Naive thymus-derived CD4-positive, alpha-beta T cell (primary cell): ENCODE measurements at regions of chr5 and their contacts with region 1.

Region 1: DNA sequence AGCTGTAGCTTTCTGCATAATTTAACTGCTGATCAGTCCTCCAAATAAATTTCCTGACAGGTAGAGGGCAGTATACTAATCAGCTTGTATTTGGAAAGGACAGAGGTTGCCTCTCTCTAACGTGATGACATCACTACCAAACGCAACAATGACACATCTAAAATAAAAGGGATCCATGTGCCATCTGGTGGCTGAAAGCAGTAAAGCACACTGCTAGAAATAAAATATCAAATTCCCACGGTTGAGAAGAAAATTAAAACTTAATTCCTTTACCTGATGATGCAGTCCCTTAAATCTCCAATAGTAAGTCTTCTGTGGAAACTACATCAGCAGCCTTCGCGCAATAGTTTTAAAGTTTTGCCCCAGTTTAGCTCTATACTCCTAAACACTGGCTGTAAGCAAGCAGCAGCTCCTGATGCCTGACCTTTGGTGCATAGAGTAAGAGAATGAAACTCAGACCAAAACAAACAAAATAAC is 54.5 kb downstream of the DIAPH1 start:
- DNase-seq: peak; percentile 17 to 89 (median 80)
- ATAC-seq: peak; percentile 100
- H3K4me3 ChIP-seq: no peak overlapping the region
- H3K4me3 Mint-ChIP-seq: peak overlapping the region in 1 of 10 donors; percentile 8
- H3K27ac ChIP-seq: peak overlapping the region; percentile 43
- H3K27ac Mint-ChIP-seq: peak overlapping the region; percentile 41 to 93 (median 72)
- H3K4me1 ChIP-seq: peaks cover 0 to 8% of the 10 kb centered on the region in 2 donors
- H3K4me1 Mint-ChIP-seq: peaks cover 13 to 51% (median 38%) of the 10 kb centered on the region in 7 donors
- H3K27me3 ChIP-seq: no peaks in the 10 kb centered on the region
- H3K27me3 Mint-ChIP-seq: no peaks in the 10 kb centered on the region

Region 2: DNA sequence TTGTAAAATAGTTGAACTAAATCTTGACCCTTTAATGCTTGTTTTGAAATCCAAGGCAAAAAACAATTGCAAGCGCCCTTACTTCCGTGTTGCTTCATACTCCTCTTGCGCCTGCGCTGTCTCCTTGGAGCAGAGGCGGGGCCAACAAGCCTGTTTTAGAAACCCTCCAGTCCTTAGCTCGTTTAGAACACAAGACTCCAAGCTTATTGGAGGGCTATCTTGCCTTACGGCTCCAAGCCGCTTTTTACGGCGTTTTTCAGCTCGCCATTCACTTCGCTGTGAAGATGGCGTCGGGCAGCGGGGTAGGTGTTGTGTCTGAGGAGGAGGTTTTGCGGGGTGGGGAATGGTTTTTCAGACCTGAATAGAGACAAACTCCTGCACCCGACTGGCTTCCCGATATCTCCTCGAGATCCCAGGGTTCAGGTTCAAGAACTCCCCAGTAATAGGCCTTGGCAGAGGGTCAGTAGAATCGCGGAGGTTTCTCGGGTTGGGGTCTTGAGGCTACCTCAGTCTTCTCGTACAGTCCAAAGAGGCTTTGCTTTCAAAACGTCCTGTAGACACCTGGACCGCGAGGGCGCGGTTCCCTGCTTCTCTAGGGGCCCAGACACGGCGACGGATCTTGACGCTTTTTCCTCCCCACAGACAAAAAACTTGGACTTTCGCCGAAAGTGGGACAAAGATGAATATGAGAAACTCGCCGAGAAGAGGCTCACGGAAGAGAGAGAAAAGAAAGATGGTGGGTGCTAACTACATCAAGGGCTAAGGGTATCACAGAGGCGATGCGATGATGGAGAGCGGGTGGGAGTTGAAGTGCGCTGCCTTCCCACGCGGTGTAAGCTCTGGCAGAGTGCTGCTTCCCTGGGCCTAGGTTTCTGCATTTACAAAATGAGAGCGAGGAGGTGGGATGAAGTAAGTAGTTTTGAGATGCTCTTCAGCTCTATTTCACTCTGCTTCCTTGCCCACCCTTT is 863.8 kb before region 1 on chr5 and contains the start of gene ZMAT2:
- CTCF ChIA-PET with region 1: no interaction called
- POLR2A ChIA-PET with region 1: no interaction called
- intact Hi-C with region 1: loop called in 1 of 2 experiments (anchors 10 kb)
- DNase-seq: peak; percentile 74 to 97 (median 92)
- ATAC-seq: peak; percentile 100
- H3K4me3 ChIP-seq: peak within 1 kb of the TSS; percentile 78
- H3K4me3 Mint-ChIP-seq: peak within 1 kb of the TSS; percentile 93 to 100 (median 98)
- H3K27ac ChIP-seq: peak within 1 kb of the TSS; percentile 87
- H3K27ac Mint-ChIP-seq: peak within 1 kb of the TSS; percentile 90 to 99 (median 97)
- H3K4me1 ChIP-seq: peaks cover 4 to 14% of the 10 kb centered on the region in 2 donors
- H3K4me1 Mint-ChIP-seq: peaks cover 18 to 35% (median 29%) of the 10 kb centered on the region in 7 donors
- H3K27me3 ChIP-seq: no peaks in the 10 kb centered on the region
- H3K27me3 Mint-ChIP-seq: no peaks in the 10 kb centered on the region
- total RNA-seq, gene ZMAT2: 37.7 to 63.0 (median 55.1) TPM

Region 3: DNA sequence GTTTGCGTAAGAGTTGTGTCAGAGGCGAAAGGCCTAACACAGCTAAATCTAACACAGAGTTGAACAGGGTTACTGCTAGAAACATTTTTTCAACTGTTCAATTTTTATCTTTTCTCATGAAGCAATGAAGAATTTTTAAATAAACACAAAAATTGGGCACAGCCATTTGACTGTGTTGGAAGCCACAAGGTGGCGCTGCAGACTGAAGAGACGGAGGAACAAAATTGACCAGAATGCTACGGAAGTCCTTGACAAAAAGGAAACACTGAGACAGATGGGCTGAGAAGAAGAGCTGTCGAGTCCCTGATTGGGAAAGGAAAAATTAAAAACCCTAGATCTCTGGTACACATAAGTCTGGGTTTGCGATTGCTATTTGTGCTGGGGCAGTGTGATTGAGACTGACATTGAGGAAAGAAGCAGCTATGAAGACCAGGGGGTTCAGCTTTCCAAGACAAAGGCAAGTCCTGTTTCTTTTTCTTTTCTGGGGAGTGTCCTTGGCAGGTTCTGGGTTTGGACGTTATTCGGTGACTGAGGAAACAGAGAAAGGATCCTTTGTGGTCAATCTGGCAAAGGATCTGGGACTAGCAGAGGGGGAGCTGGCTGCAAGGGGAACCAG is 377.2 kb before region 1 on chr5 and contains the start of gene PCDHB9:
- CTCF ChIA-PET with region 1: no interaction called
- POLR2A ChIA-PET with region 1: no interaction called
- intact Hi-C with region 1: loop called (anchors 1 to 5 kb)
- DNase-seq: peak in 1 of 9 donors; percentile 14
- ATAC-seq: no peak
- H3K4me3 ChIP-seq: no peak within 1 kb of the TSS
- H3K4me3 Mint-ChIP-seq: peak within 1 kb of the TSS; percentile 15 to 64 (median 35)
- H3K27ac ChIP-seq: no peak within 1 kb of the TSS
- H3K27ac Mint-ChIP-seq: no peak within 1 kb of the TSS
- H3K4me1 ChIP-seq: no peaks in the 10 kb centered on the region
- H3K4me1 Mint-ChIP-seq: peaks cover 0 to 12% (median 5%) of the 10 kb centered on the region in 7 donors
- H3K27me3 ChIP-seq: no peaks in the 10 kb centered on the region
- H3K27me3 Mint-ChIP-seq: peaks cover 3 to 86% (median 76%) of the 10 kb centered on the region in 5 donors
- total RNA-seq, gene PCDHB9: 1.2 TPM in 1 of 5 experiments, not detected in the others

Region 4: GRCh38 chr5:141326088-141326854 is 238.0 kb before region 1 on chr5:
- CTCF ChIA-PET with region 1: interaction called, 13 read pairs
- POLR2A ChIA-PET with region 1: interaction called, 26 read pairs
- intact Hi-C with region 1: loop called (anchors 1 to 2 kb)
- DNase-seq: peak; percentile 39 to 75 (median 57)
- ATAC-seq: peak; percentile 95
- H3K4me3 ChIP-seq: peak overlapping the region; percentile 73
- H3K4me3 Mint-ChIP-seq: peak overlapping the region; percentile 78 to 98 (median 90)
- H3K27ac ChIP-seq: peak overlapping the region; percentile 53
- H3K27ac Mint-ChIP-seq: peak overlapping the region; percentile 17 to 95 (median 80)
- H3K4me1 ChIP-seq: no peaks in the 10 kb centered on the region
- H3K4me1 Mint-ChIP-seq: peaks cover 0 to 15% (median 7%) of the 10 kb centered on the region in 7 donors
- H3K27me3 ChIP-seq: peaks cover 0 to 5% of the 10 kb centered on the region in 2 donors
- H3K27me3 Mint-ChIP-seq: peaks cover 8 to 48% (median 41%) of the 10 kb centered on the region in 5 donors

Region 5: GRCh38 chr5:141369994-141370848 is 194.0 kb before region 1 on chr5 and contains the start of gene PCDHGB3:
- CTCF ChIA-PET with region 1: interaction called, 5 read pairs
- POLR2A ChIA-PET with region 1: no interaction called
- intact Hi-C with region 1: loop called in 1 of 2 experiments (anchors 1 kb)
- DNase-seq: peak in 5 of 9 donors; percentile 21 to 42 (median 27)
- ATAC-seq: peak; percentile 76
- H3K4me3 ChIP-seq: peak within 1 kb of the TSS; percentile 29
- H3K4me3 Mint-ChIP-seq: peak within 1 kb of the TSS; percentile 70 to 86 (median 82)
- H3K27ac ChIP-seq: no peak within 1 kb of the TSS
- H3K27ac Mint-ChIP-seq: no peak within 1 kb of the TSS
- H3K4me1 ChIP-seq: no peaks in the 10 kb centered on the region
- H3K4me1 Mint-ChIP-seq: peaks cover 2 to 8% (median 6%) of the 10 kb centered on the region in 7 donors
- H3K27me3 ChIP-seq: peaks cover 0 to 11% of the 10 kb centered on the region in 2 donors
- H3K27me3 Mint-ChIP-seq: peaks cover 42 to 93% (median 82%) of the 10 kb centered on the region in 5 donors
- total RNA-seq, gene PCDHGB3: 0.24 to 0.59 (median 0.43) TPM

Region 6: DNA sequence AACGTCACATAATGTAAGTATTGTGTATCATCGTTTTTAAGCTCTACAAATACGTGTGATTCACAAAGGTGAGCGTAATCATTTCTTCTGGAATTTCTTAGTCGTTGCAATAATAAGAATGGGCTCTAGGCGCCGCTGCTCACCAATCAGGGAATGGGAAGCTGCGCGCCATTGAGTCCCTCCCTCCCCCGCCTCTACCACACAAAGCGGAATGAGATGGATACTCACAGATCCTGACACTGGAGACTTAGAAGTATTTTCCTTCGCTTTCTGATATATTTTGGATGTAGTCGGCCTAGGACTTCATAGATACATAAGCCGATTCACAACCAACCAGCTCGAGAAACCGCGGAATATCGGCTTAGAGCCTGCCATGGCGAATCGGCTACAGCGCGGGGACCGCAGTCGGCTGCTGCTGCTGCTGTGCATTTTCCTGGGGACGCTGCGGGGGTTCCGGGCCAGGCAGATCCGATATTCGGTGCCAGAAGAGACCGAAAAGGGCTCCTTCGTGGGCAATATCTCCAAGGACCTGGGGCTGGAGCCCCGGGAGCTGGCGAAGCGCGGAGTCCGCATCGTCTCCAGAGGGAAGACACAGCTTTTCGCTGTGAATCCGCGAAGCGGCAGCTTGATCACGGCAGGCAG is 143.3 kb before region 1 on chr5 and contains the start of gene PCDHGA11:
- CTCF ChIA-PET with region 1: interaction called, 10 read pairs
- POLR2A ChIA-PET with region 1: no interaction called
- intact Hi-C with region 1: loop called in 1 of 2 experiments (anchors 1 kb)
- DNase-seq: peak in 3 of 9 donors; percentile 25 to 28 (median 26)
- ATAC-seq: peak; percentile 70
- H3K4me3 ChIP-seq: no peak within 1 kb of the TSS
- H3K4me3 Mint-ChIP-seq: peak within 1 kb of the TSS; percentile 52 to 90 (median 77)
- H3K27ac ChIP-seq: no peak within 1 kb of the TSS
- H3K27ac Mint-ChIP-seq: peak within 1 kb of the TSS in 7 of 9 donors; percentile 51 to 73 (median 64)
- H3K4me1 ChIP-seq: no peaks in the 10 kb centered on the region
- H3K4me1 Mint-ChIP-seq: peaks cover 0 to 19% (median 7%) of the 10 kb centered on the region in 7 donors
- H3K27me3 ChIP-seq: peaks cover 8 to 33% of the 10 kb centered on the region in 2 donors
- H3K27me3 Mint-ChIP-seq: peaks cover 68 to 87% (median 78%) of the 10 kb centered on the region in 5 donors
- total RNA-seq, gene PCDHGA11: 0.16 to 0.29 (median 0.21) TPM in 4 of 5 experiments, not detected in the other

Region 7: DNA sequence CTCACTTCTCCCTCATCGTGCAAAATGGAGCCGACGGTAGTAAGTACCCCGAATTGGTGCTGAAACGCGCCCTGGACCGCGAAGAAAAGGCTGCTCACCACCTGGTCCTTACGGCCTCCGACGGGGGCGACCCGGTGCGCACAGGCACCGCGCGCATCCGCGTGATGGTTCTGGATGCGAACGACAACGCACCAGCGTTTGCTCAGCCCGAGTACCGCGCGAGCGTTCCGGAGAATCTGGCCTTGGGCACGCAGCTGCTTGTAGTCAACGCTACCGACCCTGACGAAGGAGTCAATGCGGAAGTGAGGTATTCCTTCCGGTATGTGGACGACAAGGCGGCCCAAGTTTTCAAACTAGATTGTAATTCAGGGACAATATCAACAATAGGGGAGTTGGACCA is 133.0 kb before region 1 on chr5:
- CTCF ChIA-PET with region 1: no interaction called
- POLR2A ChIA-PET with region 1: no interaction called
- intact Hi-C with region 1: no loop called
- DNase-seq: no peak
- ATAC-seq: no peak
- H3K4me3 ChIP-seq: no peak overlapping the region
- H3K4me3 Mint-ChIP-seq: peak overlapping the region in 9 of 10 donors; percentile 41 to 86 (median 75)
- H3K27ac ChIP-seq: no peak overlapping the region
- H3K27ac Mint-ChIP-seq: peak overlapping the region in 3 of 9 donors; percentile 13 to 78 (median 75)
- H3K4me1 ChIP-seq: no peaks in the 10 kb centered on the region
- H3K4me1 Mint-ChIP-seq: peaks cover 7 to 12% (median 9%) of the 10 kb centered on the region in 7 donors
- H3K27me3 ChIP-seq: peaks cover 7 to 16% of the 10 kb centered on the region in 2 donors
- H3K27me3 Mint-ChIP-seq: peaks cover 28 to 76% (median 73%) of the 10 kb centered on the region in 5 donors

Region 8: GRCh38 chr5:141590127-141590526 is 25.9 kb after region 1 on chr5:
- CTCF ChIA-PET with region 1: interaction called, 4 read pairs
- POLR2A ChIA-PET with region 1: interaction called, 3 read pairs
- intact Hi-C with region 1: loop called in 1 of 2 experiments (anchors 2 kb)
- DNase-seq: no peak
- ATAC-seq: peak; percentile 37
- H3K4me3 ChIP-seq: no peak overlapping the region
- H3K4me3 Mint-ChIP-seq: no peak overlapping the region
- H3K27ac ChIP-seq: no peak overlapping the region
- H3K27ac Mint-ChIP-seq: peak overlapping the region in 1 of 9 donors; percentile 56
- H3K4me1 ChIP-seq: peaks cover 12 to 13% of the 10 kb centered on the region in 2 donors
- H3K4me1 Mint-ChIP-seq: peaks cover 40 to 71% (median 58%) of the 10 kb centered on the region in 7 donors
- H3K27me3 ChIP-seq: no peaks in the 10 kb centered on the region
- H3K27me3 Mint-ChIP-seq: no peaks in the 10 kb centered on the region